Right ventricle myocardium inferior (tissue), 1 donor: ENCODE measurements at regions of chr2 and their contacts with region 1.

Region 1: GRCh38 chr2:135709992-135710391 is 31.7 kb upstream of the UBXN4 start:
- DNase-seq: peak; percentile 79
- ATAC-seq: no peak

Region 2: GRCh38 chr2:134988994-134989605 is 720.9 kb before region 1 on chr2:
- intact Hi-C with region 1: loop called (anchors 2 kb)
- DNase-seq: no peak
- ATAC-seq: no peak

Region 3: DNA sequence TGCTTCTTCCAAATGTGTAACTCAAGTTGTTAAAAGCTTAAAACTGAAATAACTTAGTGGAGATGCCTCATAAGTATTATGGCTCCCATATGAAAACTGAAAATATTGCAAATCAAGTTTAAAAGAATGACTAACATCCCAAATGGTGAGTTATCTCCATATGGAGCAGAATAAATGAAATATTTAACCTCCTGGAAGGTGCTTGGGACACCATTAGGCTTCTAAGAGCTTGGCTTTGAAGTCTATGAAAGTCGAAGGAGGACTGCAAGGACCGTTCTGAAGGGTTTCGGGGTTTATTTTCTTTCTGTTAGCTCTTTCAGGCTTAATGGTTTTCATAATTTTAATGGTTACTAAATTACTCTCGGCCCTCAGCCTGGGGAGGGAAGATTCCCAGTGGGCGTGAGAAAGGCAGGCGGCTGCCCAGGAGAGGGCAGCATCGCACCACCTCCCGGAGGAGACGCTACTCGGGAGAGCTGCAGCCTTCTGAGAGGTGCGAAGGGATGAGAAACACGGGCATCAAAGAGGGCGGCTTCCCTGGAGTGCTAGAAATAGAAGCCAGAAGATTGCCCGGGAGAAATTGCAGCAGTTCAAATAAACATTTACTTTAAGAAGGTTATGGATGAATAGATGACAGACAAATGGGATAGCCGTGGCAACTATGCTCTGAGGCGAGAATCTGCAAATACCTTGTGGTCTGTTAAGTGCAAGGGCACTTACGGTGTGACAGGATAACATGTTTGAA is 705.8 kb before region 1 on chr2:
- intact Hi-C with region 1: loop called (anchors 1 kb)
- DNase-seq: peak; percentile 77
- ATAC-seq: peak; percentile 94

Region 4: GRCh38 chr2:135473567-135473966 is 236.4 kb before region 1 on chr2:
- intact Hi-C with region 1: loop called (anchors 5 kb)
- DNase-seq: no peak
- ATAC-seq: no peak